Sciatic nerve (tissue), 2 donors: ENCODE measurements at regions of chr10 and their contacts with region 1.

Region 1: GRCh38 chr10:129756912-129757901 is 206.9 kb downstream of the EBF3 start:
- DNase-seq: peak; percentile 59
- ATAC-seq: peak; percentile 56

Region 2: DNA sequence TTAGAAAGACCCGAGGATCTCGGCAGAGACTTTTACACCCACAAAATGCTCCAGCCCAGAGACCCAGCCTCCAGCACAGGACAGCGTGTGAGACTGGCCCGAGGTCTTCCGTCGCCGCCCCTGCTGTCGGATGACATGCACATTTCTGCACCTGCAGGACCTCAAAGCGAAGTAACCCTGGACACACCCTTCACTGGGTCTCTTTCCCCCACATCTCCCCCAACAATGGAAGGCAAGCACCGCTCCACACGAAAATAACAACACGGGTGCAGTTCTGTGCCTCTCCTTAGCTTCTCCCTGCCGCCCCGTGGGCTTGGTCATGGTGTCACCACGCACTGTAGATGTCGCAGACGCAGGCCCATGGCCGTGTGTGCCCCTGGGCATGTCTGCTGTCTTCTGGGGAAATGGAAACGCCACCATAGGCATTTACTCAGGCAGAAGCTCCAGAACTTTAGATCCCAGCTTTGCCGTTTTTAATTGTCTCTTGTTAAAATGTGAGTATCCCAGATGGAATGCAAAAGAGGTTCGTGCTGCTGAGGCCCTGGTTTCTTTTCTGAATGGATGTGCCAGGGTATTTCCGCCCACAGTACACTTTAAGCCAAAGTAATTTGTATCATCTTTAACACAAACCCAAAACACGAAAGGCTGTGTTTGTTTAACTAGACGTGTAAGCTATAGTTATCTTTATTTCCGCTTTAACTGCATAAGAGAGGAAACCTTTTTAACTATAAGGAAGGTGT is 52.3 kb before region 1 on chr10:
- intact Hi-C with region 1: no loop called
- DNase-seq: no peak
- ATAC-seq: no peak

Region 3: GRCh38 chr10:129728905-129729795 is 28.1 kb before region 1 on chr10:
- intact Hi-C with region 1: no loop called
- DNase-seq: no peak
- ATAC-seq: no peak

Region 4: DNA sequence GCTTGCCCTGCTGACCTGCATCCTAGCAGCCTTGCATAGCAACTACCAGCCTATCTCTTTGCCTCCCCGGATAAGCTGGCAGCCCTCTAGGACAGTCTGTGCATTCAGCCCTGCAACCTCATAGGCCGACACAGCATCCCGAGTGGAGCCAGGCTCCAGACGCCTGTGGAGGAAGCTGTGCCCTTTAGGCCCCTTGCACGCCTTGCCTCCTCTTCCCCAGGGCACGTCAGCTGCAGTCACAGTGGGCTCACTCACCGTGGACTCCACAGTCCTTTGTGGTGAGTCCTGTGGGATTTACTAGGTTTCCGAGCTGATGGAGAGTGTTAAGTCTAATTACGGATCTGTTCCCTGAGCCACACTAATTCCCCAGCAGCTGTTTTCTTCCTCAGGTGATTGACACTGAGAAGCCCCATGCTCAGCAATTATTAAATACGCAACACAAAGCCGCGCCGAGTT is 1014.3 kb after region 1 on chr10:
- intact Hi-C with region 1: no loop called
- DNase-seq: no peak
- ATAC-seq: no peak

Region 5: DNA sequence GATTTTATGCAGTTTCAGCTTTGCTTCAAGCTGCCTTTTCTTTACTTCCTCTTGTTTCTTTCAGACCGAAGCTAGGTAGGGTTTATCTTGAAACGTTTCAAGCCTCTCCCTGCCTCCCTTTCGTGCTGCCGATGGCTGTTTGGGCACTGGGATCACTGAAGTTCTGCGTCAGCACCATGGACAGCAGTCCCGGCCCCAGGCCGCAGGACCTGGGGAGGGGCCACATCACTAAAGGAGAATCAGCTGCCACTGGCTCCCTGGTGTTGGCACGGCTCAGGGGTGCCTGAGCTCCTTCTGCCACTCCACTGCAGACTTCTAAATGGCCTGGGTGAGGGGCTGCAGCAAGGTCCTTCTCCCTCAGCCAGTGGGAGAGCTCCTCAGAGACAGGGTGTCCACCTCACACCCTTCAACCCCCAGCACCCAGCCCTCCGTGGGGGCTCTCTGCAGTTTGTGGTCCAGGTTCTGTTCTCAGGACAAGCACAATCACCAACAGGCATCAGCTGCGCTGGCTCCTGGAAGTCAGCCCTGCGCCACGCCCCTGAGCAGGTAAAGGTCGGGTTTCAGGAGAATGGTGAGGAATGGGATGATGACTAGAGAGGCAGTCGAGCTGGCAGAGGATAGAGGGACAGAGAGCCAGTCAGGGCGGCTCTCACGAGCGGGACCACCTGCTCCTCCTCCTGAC is 1167.1 kb after region 1 on chr10:
- intact Hi-C with region 1: loop called (anchors 5 kb)
- DNase-seq: no peak
- ATAC-seq: no peak